Posterior vena cava (tissue), 2 donors: ENCODE measurements at regions of chr6 and their contacts with region 1.

Region 1: GRCh38 chr6:11419763-11420453 is 117.6 kb upstream of the TMEM170B start:
- DNase-seq: no peak

Region 2: DNA sequence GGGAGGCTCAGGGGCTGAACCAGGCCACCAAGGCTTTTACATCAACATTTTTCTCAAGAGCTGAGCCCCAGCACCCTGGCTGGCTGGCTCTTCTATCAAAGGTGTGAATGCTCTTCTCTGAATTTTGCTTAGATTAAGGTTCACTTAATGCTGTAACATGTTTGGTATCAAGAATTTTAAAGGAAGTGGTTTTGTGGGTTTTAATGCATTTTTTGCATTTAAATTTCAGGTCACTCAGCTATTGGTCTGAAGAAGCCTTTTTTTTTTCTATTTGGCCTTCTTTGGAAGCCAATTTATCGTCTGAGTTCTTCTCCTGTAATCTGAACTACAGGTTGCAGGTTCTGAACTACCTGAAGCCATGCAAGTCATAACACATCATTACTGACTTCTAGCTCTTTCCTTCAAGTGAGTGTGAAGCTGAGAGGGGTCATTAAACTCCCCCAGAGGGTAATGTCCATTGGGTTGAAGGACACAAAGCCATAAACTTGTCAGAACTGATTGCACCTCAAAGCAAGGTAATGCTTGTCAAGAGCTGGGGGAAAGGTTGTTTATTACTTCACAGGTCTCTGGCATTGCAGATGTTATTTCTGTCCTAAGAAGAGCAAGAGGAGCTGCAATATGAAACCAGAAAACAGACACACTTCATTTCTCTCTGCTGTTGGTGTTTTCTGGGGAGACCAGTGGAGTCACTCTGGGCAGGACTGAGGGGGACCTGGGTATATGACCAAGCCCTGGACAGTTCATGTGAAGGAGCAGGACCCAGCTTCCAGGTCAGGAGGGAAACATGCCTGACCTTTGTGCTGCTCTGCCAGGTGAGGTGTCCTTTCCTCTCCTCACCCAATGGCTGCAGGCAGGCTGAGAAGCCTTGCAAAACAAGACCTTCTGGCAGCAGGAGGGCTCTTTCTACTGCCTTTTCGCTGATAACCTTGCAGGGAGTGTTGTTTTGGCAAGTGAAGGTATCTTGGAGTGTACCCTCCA is 161.4 kb before region 1 on chr6:
- intact Hi-C with region 1: loop called in 1 of 2 experiments (anchors 1 kb)
- DNase-seq: no peak

Region 3: GRCh38 chr6:11366183-11366933 is 53.5 kb before region 1 on chr6:
- intact Hi-C with region 1: no loop called
- DNase-seq: no peak